Activated naive CD4-positive, alpha-beta T cell treated with anti-CD3 and anti-CD28 coated beads, Interleukin-2, amount 10 ng/mL, durations not matched to agents 7 days and 5 days (primary cell): ENCODE measurements at regions of chr19 and their contacts with region 1.

Region 1: GRCh38 chr19:41310033-41310758 is at the start of gene CCDC97:
- DNase-seq: peak; percentile 92
- H3K4me3 Mint-ChIP-seq: peak within 1 kb of the TSS; percentile 91
- H3K27ac Mint-ChIP-seq: peak within 1 kb of the TSS; percentile 95
- H3K4me1 Mint-ChIP-seq: peaks cover 74% of the 10 kb centered on the region
- H3K27me3 Mint-ChIP-seq: peaks cover 6% of the 10 kb centered on the region

Region 2: DNA sequence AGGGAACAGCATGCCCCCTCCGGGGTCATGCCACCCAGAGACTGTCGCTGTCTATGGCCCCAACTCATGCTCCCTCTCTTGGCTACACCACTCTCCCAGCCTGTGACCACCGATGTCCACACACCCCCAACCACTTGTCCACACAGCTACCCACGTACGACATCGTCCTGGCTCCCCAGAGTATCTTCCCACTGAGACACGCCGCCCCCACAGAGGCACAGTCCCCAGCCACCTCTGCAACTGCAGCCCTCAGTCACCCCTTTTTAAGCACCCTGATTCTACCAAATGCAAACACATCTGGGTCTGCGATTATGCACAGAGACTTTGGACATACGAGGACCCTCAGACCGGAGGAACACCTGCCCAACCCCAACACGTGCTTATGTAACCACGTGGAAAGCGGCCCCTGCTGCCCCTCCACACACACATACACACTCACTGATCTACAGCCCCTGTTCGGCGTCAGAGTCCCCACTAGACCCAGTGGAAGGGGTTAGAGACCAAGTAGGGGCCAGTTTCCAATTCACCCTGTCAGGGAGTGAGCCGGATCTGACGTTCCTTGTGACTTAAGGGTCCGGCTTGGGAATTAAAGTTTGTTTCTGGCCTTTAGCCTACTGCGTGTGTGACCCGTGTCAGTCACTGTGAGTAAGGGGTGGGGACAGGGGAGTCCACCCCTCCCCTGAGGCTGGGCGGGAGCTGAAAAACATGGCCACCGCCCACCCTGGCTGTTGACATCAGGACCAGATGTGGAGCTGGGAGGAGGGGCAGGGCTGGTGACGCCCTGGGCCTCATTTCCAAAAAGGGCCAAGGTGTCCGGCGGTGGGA is 103.1 kb before region 1 on chr19:
- CTCF ChIA-PET with region 1: interaction called, 30 read pairs
- DNase-seq: no peak
- H3K4me3 Mint-ChIP-seq: no peak overlapping the region
- H3K27ac Mint-ChIP-seq: no peak overlapping the region
- H3K4me1 Mint-ChIP-seq: peaks cover 13% of the 10 kb centered on the region
- H3K27me3 Mint-ChIP-seq: peaks cover 29% of the 10 kb centered on the region

Region 3: GRCh38 chr19:41263850-41264580 is 46.2 kb before region 1 on chr19 and contains the start of gene HNRNPUL1:
- CTCF ChIA-PET with region 1: interaction called, 39 read pairs
- DNase-seq: peak; percentile 99
- H3K4me3 Mint-ChIP-seq: peak within 1 kb of the TSS; percentile 79
- H3K27ac Mint-ChIP-seq: peak within 1 kb of the TSS; percentile 100
- H3K4me1 Mint-ChIP-seq: peaks cover 45% of the 10 kb centered on the region
- H3K27me3 Mint-ChIP-seq: peaks cover 11% of the 10 kb centered on the region

Region 4: DNA sequence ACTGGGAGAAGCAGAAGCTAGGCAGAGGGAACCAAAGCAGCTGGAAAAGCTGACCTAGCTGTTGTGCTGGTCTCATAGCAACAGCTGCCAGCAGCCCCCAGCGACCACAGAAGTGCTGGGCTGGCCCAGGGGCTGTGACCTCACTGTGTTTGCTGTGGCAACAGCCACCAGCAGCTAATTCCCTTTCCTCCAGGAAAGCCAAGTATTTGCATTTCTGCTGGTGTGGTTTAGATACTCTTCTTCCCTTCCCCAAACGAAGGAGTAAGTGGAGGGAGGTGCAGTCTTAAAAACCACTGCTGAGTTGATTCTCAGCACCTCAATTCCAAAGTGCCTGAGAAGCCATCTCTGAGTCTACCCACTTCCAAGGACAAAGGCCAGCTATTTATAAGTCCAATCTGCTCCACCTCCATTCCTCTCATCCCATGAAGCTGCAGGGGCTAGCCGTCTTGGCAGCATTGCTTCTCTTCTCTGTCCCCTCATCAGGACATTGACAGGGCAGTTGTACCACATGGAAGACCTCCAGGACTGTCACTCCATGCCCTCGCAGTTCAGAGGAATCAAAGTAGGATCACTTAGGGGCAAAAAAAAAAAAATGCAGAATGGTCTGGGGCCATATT is 11.7 kb before region 1 on chr19:
- CTCF ChIA-PET with region 1: interaction called, 20 read pairs
- DNase-seq: no peak
- H3K4me3 Mint-ChIP-seq: no peak overlapping the region
- H3K27ac Mint-ChIP-seq: peak overlapping the region; percentile 64
- H3K4me1 Mint-ChIP-seq: peaks cover 76% of the 10 kb centered on the region
- H3K27me3 Mint-ChIP-seq: no peaks in the 10 kb centered on the region

Region 5: DNA sequence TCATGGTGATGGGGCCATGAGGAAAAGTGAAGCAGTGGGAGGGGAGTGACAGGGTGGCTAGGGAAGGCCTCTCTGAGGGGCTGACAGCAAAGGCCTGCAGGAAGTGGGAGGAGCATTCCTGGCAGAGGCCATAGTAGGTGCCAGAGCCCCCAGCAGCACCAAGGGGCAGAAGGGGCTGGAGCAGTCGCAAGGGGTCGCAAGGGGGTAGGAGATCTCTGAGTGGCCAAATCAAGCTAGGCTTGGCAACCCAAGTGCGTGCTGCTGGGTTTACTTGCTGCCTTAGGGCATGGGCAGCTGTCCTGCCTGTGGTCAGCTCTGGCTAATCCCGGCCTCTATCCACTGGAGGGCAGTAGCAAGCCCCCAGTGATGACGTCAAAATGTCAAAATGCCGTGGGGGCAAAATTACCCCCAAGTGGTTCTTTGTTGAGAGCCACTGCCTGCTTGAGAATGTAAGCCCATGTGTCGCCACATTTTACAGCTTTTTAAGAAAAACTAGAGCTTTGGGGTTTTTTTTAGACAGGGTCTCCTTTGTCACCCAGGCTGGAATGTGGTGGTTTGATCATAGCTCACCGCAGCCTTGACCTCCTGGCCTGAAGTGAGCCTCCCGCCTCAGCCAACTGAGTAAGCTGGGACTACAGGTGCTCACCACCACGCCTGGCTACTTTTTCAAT is 11.5 kb after region 1 on chr19:
- CTCF ChIA-PET with region 1: interaction called, 10 read pairs
- DNase-seq: no peak
- H3K4me3 Mint-ChIP-seq: no peak overlapping the region
- H3K27ac Mint-ChIP-seq: no peak overlapping the region
- H3K4me1 Mint-ChIP-seq: peaks cover 38% of the 10 kb centered on the region
- H3K27me3 Mint-ChIP-seq: no peaks in the 10 kb centered on the region